ENCODE measurements at regions of chr17 and their contacts with region 1.

Region 1: DNA sequence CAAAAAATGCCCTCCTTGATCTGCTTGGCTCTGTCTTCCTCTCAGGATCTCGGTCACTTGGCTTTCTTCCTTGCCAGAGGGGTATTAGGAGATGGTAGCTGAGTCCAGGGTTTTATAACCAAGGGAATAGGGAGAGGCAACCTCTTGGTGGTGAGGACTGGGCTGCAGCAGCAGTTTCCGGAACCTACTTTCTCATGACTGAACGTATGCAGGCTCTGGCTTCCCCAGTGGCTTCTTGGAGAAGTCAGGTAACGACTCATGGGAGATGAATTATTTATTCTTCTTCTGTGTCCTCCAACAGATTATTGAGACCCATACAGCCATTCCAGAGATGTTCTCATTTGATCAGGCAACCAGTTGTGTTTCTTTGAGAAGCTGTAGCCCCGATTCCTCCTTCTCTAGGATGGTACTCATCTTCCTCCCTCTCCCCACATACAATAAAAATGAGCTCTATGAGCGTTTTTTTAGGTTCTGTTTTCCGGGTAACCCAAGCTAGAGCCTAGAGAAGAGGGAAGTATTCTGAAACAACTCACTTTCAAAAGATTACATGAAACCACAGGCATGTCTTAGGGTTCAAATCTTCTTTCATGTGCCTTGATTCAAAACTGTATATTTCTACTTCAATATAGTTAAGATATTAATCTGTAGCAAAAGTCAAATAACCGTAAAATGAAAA is 22.3 kb upstream of the DHX40 start:
- DNase-seq: no peak
- H3K4me3 ChIP-seq: no peak overlapping the region
- H3K27ac ChIP-seq: no peak overlapping the region
- H3K4me1 ChIP-seq: peaks cover 0 to 3% (median 1%) of the 10 kb centered on the region in 4 experiments; a peak in 1 of 7 replicates
- H3K27me3 ChIP-seq: no peaks in the 10 kb centered on the region
- CTCF ChIP-seq: no peak
- EP300 ChIP-seq: no peak
- POLR2A ChIP-seq: no peak
- RAD21 ChIP-seq: no peak

Region 2: DNA sequence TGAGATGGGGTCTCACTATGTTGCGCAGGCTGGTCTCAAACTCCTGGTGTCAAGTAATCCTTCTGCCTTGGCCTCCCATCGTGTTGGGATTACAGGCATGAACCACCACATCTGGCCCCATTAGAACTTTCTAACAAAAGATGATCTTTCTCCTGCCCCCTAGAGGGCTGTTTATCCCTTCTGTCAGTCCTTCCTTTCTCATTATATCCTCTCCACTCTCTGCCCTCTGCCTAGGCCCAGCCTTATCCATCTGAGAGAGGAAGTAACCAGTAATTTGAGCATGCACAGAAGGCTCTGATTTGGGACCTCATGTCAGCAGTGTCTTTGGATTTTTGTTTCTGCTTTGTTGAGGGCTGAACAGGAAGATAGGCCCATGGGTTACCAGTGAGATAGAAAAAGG is 17.9 kb after region 1 on chr17:
- CTCF ChIA-PET with region 1: interaction called, 13 read pairs
- POLR2A ChIA-PET with region 1: no interaction called
- DNase-seq: no peak
- H3K4me3 ChIP-seq: no peak overlapping the region
- H3K27ac ChIP-seq: no peak overlapping the region
- H3K4me1 ChIP-seq: no peaks in the 10 kb centered on the region
- H3K27me3 ChIP-seq: peaks cover 7 to 13% (median 11%) of the 10 kb centered on the region in 4 experiments
- CTCF ChIP-seq: peak in 2 of 3 experiments; percentile 20 to 55; a peak in 2 of 4 replicates
- EP300 ChIP-seq: no peak
- POLR2A ChIP-seq: no peak
- RAD21 ChIP-seq: peak in 1 of 2 experiments; percentile 15; a peak in 2 of 4 replicates

Region 3: DNA sequence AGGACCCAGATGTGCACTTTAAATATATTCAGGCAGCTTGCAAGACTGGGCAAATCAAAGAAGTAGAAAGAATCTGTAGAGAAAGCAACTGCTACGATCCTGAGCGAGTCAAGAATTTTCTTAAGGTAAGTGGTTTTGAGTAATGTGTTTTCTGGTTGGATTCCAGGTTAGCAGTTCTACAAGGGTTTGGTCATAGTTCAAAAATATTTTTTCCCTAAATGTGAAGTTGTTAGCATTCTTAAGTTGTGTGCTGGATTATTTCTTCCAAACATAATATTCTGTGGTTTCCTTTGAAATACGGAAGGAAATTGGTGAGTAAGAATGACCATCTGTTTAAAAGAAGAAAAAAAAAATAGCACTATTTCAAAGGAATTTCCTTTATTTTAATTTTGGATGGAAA is 125.7 kb after region 1 on chr17:
- CTCF ChIA-PET with region 1: no interaction called
- POLR2A ChIA-PET with region 1: no interaction called
- DNase-seq: no peak
- H3K4me3 ChIP-seq: no peak overlapping the region
- H3K27ac ChIP-seq: no peak overlapping the region
- H3K4me1 ChIP-seq: no peaks in the 10 kb centered on the region
- H3K27me3 ChIP-seq: no peaks in the 10 kb centered on the region
- CTCF ChIP-seq: no peak
- EP300 ChIP-seq: no peak
- POLR2A ChIP-seq: no peak
- RAD21 ChIP-seq: no peak

Region 4: GRCh38 chr17:59725691-59726090 is 182.6 kb after region 1 on chr17:
- CTCF ChIA-PET with region 1: no interaction called
- POLR2A ChIA-PET with region 1: no interaction called
- DNase-seq: no peak
- H3K4me3 ChIP-seq: no peak overlapping the region
- H3K27ac ChIP-seq: no peak overlapping the region
- H3K4me1 ChIP-seq: 0 out of 7 replicates have a peak, but pooled peaks cover 0 to 2% (median 0%) of the 10 kb centered on the region in 4 experiments
- H3K27me3 ChIP-seq: no peaks in the 10 kb centered on the region
- CTCF ChIP-seq: no peak
- EP300 ChIP-seq: no peak
- POLR2A ChIP-seq: no peak
- RAD21 ChIP-seq: no peak

Measured in H1 (cell line).